ENCODE measurements at regions of chr1 and their contacts with region 1.

Region 1: DNA sequence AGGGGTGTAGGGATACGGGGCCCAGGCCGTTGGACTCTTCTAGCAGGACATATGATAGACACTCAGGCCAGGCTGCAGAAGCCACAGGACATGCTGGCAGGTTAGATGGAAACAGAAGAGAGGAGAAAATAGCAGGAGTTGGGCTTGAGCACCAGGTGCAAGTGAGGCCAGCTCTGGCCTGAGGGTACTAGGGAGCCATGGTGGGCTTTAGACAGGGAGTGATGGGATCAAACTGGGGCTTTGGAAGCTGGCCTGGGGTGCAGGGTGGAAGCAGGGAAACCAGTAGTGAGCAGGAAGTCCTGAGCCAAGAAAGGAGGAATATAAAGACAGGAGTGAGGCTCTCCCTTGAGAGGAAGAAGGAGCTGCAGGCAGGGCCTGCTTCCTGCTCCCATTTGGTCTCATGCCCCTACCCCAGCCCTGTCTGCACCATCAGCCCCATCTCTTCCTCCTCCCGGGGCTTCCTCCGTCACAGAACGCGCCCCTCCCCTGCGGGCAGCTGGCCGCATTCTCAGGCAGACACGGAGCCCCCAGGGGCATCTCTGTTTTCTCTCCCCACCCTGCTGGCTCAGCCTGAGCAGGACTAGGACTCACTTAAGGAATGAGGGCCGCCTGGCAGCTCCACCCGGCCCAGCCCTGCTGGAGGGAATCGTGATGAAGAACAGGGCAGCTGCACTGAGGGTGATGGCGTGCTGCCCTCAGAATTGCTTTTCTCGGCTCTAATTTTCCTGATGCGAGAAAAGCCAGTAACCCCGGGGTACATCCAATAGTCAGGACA is 165.5 kb upstream of the TMEM51 start:
- DNase-seq: no peak
- H3K4me3 ChIP-seq: no peak overlapping the region
- H3K27ac ChIP-seq: no peak overlapping the region
- H3K27me3 ChIP-seq: no peaks in the 10 kb centered on the region
- CTCF ChIP-seq: no peak

Region 2: GRCh38 chr1:14958249-14959058 is 29.6 kb before region 1 on chr1:
- CTCF ChIA-PET with region 1: no interaction called
- POLR2A ChIA-PET with region 1: interaction called, 10 read pairs
- DNase-seq: no peak
- H3K4me3 ChIP-seq: no peak overlapping the region
- H3K27ac ChIP-seq: no peak overlapping the region
- H3K27me3 ChIP-seq: no peaks in the 10 kb centered on the region
- CTCF ChIP-seq: no peak

Measured in AG04450 (cell line).